ENCODE measurements at regions of chr19 and their contacts with region 1.

Region 1: GRCh38 chr19:51688672-51689571 is 4.2 kb upstream of the SPACA6 start:
- DNase-seq: peak; percentile 93
- ATAC-seq: peak; percentile 85 to 86

Region 2: DNA sequence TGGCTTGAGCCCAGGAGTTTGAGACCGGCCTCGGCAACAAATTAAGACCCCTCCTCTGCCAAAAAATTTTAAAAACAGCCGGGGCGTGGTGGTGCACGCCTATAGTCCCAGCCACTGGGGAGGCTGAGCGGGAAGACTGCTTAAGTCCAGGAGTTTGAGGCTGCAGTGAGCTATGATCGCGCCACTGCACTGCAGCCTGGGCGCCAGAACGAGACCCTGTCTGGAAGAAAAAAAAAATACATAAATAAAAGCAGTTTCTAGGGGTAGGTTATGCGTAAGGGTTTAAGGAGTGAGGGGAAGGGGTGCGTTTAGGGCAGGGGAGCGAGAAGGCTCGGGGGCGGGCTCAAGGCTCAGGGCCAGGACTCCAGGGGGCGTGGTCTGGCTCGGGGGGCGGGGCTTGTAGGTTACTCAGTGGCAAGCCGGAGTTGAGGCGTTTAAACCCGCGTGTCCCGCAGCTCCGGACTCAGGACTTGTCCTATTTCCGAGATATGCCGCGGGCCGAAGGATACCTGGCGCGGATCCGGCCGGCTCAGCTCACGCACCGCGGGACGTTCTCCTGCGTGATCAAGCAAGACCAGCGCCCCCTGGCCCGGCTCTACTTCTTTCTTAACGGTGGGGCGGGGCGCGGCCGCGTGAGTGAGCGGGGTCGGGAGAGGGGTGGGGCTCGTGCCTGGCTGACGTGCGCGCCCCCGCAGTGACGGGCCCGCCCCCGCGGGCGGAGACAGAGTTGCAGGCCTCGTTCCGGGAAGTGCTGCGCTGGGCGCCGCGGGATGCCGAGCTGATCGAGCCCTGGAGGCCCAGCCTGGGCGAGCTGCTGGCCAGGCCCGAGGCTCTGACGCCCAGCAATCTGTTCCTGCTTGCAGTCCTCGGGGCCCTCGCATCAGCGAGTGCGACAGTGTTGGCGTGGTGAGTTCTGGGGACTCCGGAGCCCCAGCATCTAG is 14.9 kb after region 1 on chr19:
- intact Hi-C with region 1: loop called in 1 of 2 experiments (anchors 2 kb)
- DNase-seq: peak; percentile 98
- ATAC-seq: peak; percentile 86 to 95

Region 3: GRCh38 chr19:51726049-51726448 is 37.1 kb after region 1 on chr19:
- intact Hi-C with region 1: no loop called
- DNase-seq: peak; percentile 75
- ATAC-seq: peak; percentile 69 to 82